ENCODE measurements at regions of chr2 and their contacts with region 1.

Region 1: DNA sequence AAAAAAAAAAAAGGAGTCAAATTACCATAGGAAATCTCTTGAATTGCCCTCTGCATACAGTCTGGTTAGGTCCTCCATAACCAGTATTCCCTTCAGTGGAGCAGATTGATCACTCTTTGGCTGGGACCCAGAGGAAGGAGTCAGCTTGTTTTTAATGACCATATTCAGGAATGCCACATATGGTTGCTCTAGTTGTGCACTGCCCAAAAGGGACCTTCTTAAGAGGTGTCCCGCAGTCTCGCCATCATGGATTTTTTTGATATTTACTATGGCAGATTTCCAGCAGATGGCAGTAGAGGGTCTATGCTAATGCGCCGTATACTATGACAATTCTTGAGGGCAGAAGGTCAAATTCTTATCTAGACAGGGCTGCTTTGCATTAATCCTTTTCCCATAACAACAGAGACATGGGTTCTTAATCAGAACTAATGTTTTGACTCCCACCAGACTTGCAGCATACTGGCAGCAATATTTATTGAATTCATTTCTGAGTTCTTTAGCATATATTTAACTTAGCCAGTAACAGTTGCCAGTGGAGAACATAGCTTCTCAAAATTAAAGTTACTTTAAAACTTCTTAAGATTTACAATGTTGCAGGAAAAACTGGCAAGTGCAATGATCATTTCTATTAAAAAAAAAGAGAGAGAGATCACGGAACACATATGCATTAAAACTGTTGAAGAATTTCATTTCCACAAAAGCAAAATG is 31.8 kb upstream of the INPP4A start:
- DNase-seq: peak; percentile 35 to 90
- ATAC-seq: peak; percentile 89 to 98 (median 96)
- H3K4me3 ChIP-seq: no peak overlapping the region
- H3K4me3 Mint-ChIP-seq: no peak overlapping the region
- H3K27ac ChIP-seq: no peak overlapping the region
- H3K27ac Mint-ChIP-seq: no peak overlapping the region
- H3K4me1 ChIP-seq: no peaks in the 10 kb centered on the region
- H3K4me1 Mint-ChIP-seq: peaks cover 0 to 5% of the 10 kb centered on the region in 2 donors
- H3K27me3 ChIP-seq: no peaks in the 10 kb centered on the region
- H3K27me3 Mint-ChIP-seq: peaks cover 0 to 3% of the 10 kb centered on the region in 2 donors
- CTCF ChIP-seq: peak; percentile 81

Region 2: GRCh38 chr2:98479959-98480524 is 67.1 kb after region 1 on chr2:
- intact Hi-C with region 1: loop called (anchors 5 kb)
- DNase-seq: peak in 1 of 2 donors; percentile 57
- ATAC-seq: peak; percentile 73 to 79 (median 73)
- H3K4me3 ChIP-seq: no peak overlapping the region
- H3K4me3 Mint-ChIP-seq: peak overlapping the region; percentile 82
- H3K27ac ChIP-seq: peak overlapping the region; percentile 52
- H3K27ac Mint-ChIP-seq: peak overlapping the region; percentile 98 to 99
- H3K4me1 ChIP-seq: peaks cover 92% of the 10 kb centered on the region
- H3K4me1 Mint-ChIP-seq: peaks cover 95 to 99% of the 10 kb centered on the region in 2 donors
- H3K27me3 ChIP-seq: no peaks in the 10 kb centered on the region
- H3K27me3 Mint-ChIP-seq: no peaks in the 10 kb centered on the region
- CTCF ChIP-seq: no peak

Region 3: DNA sequence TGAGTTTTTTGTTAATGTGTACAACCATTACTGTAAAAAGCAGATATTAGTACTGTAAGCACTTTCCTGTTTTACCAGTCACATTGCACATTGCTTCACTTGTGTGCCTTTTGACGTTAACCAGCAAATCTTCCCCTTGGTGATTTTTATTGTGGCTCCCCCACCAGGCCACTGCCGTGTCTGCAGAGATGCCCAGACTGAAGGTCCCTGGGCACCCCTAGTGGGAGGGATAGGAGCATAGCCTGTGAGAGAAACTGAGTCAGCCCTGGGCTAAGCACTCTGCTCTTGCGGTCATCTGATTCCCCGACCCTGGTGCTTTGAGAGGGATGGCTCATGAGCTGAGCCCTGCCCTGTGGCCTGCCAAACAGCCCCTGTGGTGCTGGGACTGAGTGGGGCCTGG is 105.2 kb after region 1 on chr2:
- intact Hi-C with region 1: loop called (anchors 1 kb)
- DNase-seq: peak; percentile 52 to 80
- ATAC-seq: peak; percentile 74 to 86 (median 81)
- H3K4me3 ChIP-seq: no peak overlapping the region
- H3K4me3 Mint-ChIP-seq: no peak overlapping the region
- H3K27ac ChIP-seq: no peak overlapping the region
- H3K27ac Mint-ChIP-seq: peak overlapping the region; percentile 34 to 83
- H3K4me1 ChIP-seq: peaks cover 45% of the 10 kb centered on the region
- H3K4me1 Mint-ChIP-seq: peaks cover 66 to 67% of the 10 kb centered on the region in 2 donors
- H3K27me3 ChIP-seq: no peaks in the 10 kb centered on the region
- H3K27me3 Mint-ChIP-seq: no peaks in the 10 kb centered on the region
- CTCF ChIP-seq: peak; percentile 71

Region 4: DNA sequence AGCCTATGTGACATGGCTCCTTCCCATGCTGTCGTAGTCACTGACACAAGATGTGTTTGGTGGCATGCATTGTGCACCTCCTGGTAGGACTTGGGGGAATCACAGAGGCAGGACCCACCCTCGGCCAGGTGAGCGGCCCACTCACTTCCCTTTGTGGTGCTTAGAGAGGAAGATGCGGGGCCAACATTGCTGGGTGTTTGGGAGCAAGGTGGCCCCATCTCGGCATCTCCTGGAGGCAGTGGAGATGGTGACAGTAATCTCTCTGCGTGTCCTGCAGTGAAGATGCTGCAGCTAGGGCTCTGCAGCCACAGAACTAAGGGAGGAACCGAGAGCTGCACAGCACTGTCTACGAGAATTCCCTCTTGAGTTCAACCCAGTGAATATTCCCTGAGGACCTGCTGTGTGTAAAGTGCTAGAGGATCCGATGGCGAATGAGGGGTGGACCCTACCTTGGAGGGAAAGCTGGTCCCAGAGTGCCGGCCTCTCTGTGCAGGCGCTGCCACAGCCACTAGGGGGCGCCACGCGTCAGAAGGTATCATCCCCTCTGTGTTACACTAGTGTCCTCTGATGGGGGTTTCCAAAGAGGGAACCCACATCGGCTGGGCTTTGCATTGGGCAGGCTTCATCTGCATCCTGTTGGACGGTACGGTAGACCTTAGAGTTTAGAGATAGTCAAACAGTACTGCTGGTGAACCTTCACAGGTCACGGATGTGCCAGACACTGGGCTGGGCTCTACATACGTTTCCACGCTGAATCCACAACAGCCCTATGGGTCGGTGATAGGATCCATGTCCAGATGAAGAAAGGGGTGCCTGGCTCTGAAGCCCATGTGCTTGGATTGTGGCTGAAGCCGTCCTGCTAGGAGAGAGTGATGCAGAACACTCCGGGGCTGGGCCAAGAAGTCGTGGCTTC is 156.2 kb after region 1 on chr2:
- intact Hi-C with region 1: loop called (anchors 1 kb)
- DNase-seq: peak; percentile 70 to 79
- ATAC-seq: peak; percentile 72 to 97 (median 93)
- H3K4me3 ChIP-seq: no peak overlapping the region
- H3K4me3 Mint-ChIP-seq: no peak overlapping the region
- H3K27ac ChIP-seq: no peak overlapping the region
- H3K27ac Mint-ChIP-seq: peak overlapping the region; percentile 84 to 86
- H3K4me1 ChIP-seq: no peaks in the 10 kb centered on the region
- H3K4me1 Mint-ChIP-seq: peaks cover 5 to 25% of the 10 kb centered on the region in 2 donors
- H3K27me3 ChIP-seq: no peaks in the 10 kb centered on the region
- H3K27me3 Mint-ChIP-seq: no peaks in the 10 kb centered on the region
- CTCF ChIP-seq: peak; percentile 97

Region 5: DNA sequence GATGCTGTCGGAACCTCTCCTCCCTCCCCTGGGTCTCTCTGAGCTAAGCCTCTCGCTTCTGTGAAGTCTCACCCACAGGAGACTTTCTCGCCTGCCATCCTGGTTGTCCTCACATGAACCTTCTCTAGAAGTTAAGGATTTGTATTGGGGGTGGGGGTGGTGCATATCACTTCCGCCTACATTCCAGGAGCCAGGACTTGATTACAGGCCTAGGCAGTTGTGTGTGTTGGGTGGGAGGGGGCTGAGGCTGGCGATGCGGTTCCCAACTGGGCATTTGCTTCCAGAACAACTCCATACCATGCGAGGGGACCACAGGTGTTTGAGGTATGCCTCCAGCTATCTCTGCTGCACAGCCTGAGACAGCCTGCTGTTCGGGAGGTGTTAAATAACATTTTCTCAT is 374.8 kb after region 1 on chr2:
- intact Hi-C with region 1: no loop called
- DNase-seq: no peak
- ATAC-seq: no peak
- H3K4me3 ChIP-seq: no peak overlapping the region
- H3K4me3 Mint-ChIP-seq: no peak overlapping the region
- H3K27ac ChIP-seq: no peak overlapping the region
- H3K27ac Mint-ChIP-seq: no peak overlapping the region
- H3K4me1 ChIP-seq: no peaks in the 10 kb centered on the region
- H3K4me1 Mint-ChIP-seq: peaks cover 0 to 5% of the 10 kb centered on the region in 2 donors
- H3K27me3 ChIP-seq: no peaks in the 10 kb centered on the region
- H3K27me3 Mint-ChIP-seq: no peaks in the 10 kb centered on the region
- CTCF ChIP-seq: no peak